ENCODE measurements at regions of chr10 and their contacts with region 1.

Region 1: GRCh38 chr10:5446390-5446926 is 34.1 kb downstream of the NET1 start:
- DNase-seq: peak; percentile 54
- H3K4me3 ChIP-seq: peak overlapping the region; percentile 84
- H3K27ac ChIP-seq: peak overlapping the region; percentile 47
- H3K27me3 ChIP-seq: no peaks in the 10 kb centered on the region
- CTCF ChIP-seq: no peak

Region 2: DNA sequence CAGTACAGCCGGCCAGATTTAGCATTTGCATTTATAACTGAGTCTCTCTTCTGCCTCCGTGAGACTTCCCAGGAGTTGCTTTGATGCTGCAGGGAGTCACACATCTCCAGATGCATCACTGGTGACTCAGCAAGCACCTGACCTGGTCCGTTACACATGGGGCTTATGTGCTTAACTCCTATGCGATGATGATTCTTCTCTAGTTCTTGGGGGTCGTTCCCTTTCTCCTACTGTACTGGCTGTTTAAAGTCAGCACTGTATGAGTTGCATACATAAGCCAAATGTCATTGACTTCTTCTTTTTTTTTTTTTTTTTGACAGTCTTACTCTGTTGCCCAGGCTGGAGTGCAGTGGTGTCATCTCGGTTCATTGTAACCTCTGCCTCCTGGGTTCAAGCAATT is 633.4 kb before region 1 on chr10:
- CTCF ChIA-PET with region 1: interaction called, 13 read pairs
- POLR2A ChIA-PET with region 1: no interaction called
- DNase-seq: peak; percentile 82
- H3K4me3 ChIP-seq: no peak overlapping the region
- H3K27ac ChIP-seq: peak overlapping the region; percentile 70
- H3K27me3 ChIP-seq: no peaks in the 10 kb centered on the region
- CTCF ChIP-seq: no peak

Region 3: DNA sequence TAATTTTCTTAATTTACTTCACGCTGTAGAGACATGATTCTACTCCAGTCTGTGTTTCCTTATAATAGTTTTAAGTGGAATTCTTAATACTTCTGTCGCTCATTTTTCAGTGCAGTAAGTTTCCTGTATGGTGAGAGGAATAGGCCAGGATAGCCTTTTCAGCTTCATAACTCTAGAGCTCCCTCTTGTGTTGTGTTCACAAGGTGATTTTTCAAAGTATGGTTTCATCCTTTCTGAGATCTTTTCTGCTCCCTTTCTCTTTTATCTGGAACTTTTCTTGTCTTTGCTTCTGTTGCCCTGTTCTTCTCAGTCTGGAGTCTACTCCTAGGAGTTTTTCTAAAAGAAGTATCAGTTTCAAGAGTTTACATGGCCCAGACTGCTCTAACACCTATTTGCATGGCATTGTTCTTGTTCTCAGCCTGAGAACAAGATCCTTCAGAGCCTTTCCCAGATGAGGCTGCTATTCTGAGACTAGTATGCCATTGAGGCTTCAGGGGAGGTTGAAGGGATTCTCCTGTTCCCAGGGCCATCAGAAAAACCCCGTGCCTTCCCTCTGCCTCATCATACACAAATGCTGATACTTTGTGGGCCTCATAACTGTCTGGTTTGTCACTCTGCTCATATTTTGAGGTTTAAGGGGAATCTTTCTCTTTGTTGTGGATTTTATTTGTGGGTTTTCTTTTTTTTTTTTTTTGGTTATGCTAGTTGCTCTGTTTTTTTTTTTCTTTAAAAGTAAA is 12.3 kb before region 1 on chr10:
- CTCF ChIA-PET with region 1: interaction called, 69 read pairs
- POLR2A ChIA-PET with region 1: interaction called, 4 read pairs
- DNase-seq: no peak
- H3K4me3 ChIP-seq: no peak overlapping the region
- H3K27ac ChIP-seq: peak overlapping the region; percentile 48
- H3K27me3 ChIP-seq: no peaks in the 10 kb centered on the region
- CTCF ChIP-seq: peak; percentile 77

Region 4: GRCh38 chr10:5614155-5614721 is 167.8 kb after region 1 on chr10:
- CTCF ChIA-PET with region 1: interaction called, 16 read pairs
- POLR2A ChIA-PET with region 1: no interaction called
- DNase-seq: no peak
- H3K4me3 ChIP-seq: no peak overlapping the region
- H3K27ac ChIP-seq: peak overlapping the region; percentile 52
- H3K27me3 ChIP-seq: no peaks in the 10 kb centered on the region
- CTCF ChIP-seq: no peak

Region 5: DNA sequence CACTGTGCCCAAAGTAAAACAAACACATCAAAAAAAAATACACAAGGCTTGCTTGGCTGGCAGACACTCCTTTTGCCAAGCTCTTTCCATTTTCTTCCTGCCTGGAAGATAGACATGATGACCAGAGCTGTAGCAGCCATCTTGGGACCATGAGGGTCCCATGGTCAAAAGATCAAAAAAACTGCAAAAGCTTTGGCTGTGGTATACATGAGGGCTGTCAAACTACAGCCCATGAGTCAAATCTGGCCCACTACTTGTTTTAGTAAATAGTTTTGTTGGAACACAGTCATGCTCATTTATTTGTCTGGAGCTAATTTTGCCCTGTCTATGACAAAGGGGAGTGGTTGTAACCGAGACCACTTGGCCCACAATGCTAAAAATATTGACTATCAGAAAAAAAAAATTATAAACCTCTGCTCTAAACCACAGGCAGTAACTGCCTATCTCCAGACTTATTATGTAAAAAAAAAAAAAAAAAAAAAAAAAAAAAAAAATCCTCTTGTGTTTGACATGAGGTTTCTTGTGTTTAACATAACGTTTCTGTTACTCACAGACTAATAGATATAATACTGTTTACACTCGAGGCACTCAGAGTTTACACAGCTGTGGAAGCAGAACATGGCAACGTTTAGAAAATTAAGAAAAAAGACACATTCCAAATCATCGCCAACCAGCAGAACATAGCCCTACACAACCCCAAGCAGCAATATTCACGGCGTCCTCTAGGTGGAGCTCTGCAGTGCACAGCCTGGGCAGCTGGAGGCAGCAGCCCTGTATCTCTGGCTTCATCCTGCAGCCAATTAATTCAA is 183.0 kb after region 1 on chr10:
- CTCF ChIA-PET with region 1: interaction called, 309 read pairs
- POLR2A ChIA-PET with region 1: interaction called, 6 read pairs
- DNase-seq: peak; percentile 90
- H3K4me3 ChIP-seq: no peak overlapping the region
- H3K27ac ChIP-seq: peak overlapping the region; percentile 52
- H3K27me3 ChIP-seq: no peaks in the 10 kb centered on the region
- CTCF ChIP-seq: peak; percentile 98